MCF 10A (cell line): ENCODE measurements at regions of chr11 and their contacts with region 1.

Region 1: GRCh38 chr11:57530596-57531507 is at the start of gene TIMM10:
- DNase-seq: peak; percentile 98
- H3K4me3 Mint-ChIP-seq: peak within 1 kb of the TSS; percentile 96
- H3K27ac Mint-ChIP-seq: peak within 1 kb of the TSS; percentile 79
- H3K4me1 Mint-ChIP-seq: peaks cover 11% of the 10 kb centered on the region
- H3K27me3 Mint-ChIP-seq: peaks cover 8% of the 10 kb centered on the region
- CTCF ChIP-seq: no peak
- total RNA-seq, gene TIMM10: 52.2 and 80.3 TPM in 2 replicates

Region 2: DNA sequence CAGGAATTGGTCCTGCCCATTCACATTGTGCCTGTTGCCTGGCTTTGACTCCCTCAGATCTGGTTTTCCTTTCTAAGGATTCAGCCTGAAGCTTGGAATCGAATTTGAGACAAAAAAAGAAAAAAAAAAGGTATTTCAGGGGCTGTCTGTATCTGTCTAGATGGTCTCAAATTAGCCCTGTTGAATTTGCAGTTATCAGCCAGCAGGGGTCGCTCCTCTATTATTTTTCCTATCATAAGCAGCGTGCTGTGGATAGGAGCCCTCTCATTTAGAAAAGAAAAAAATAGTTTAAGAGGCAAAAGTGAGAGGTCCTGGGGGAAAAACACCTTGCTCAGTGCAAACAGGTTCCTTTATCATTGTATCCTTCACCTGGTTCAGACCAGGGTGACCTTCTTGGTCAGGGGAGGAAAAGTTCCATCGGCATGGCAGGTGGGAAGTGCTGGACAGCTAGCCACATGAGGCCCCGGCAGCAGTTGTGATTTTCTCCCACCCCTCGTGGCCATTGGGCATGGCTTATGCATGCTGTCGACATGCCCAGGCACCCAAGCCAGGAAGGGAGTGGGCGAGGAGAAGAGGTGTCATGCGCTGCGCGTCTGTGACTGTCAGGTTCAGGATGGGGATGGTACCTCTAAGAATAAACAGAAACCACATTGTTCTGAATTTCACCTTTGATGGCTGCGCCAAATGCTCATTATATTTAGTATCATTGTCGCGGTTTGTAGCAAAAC is 529.0 kb before region 1 on chr11:
- CTCF ChIA-PET with region 1: no interaction called
- POLR2A ChIA-PET with region 1: no interaction called
- intact Hi-C with region 1: no loop called
- DNase-seq: peak; percentile 11
- H3K4me3 Mint-ChIP-seq: no peak overlapping the region
- H3K27ac Mint-ChIP-seq: no peak overlapping the region
- H3K4me1 Mint-ChIP-seq: no peaks in the 10 kb centered on the region
- H3K27me3 Mint-ChIP-seq: no peaks in the 10 kb centered on the region
- CTCF ChIP-seq: peak; percentile 42

Region 3: GRCh38 chr11:57237204-57237681 is 293.6 kb before region 1 on chr11 and contains the start of gene APLNR:
- CTCF ChIA-PET with region 1: no interaction called
- POLR2A ChIA-PET with region 1: no interaction called
- intact Hi-C with region 1: no loop called
- DNase-seq: no peak
- H3K4me3 Mint-ChIP-seq: no peak within 1 kb of the TSS
- H3K27ac Mint-ChIP-seq: no peak within 1 kb of the TSS
- H3K4me1 Mint-ChIP-seq: no peaks in the 10 kb centered on the region
- H3K27me3 Mint-ChIP-seq: peaks cover 23% of the 10 kb centered on the region
- CTCF ChIP-seq: no peak
- total RNA-seq, gene APLNR: not detected in 2 replicates

Region 4: DNA sequence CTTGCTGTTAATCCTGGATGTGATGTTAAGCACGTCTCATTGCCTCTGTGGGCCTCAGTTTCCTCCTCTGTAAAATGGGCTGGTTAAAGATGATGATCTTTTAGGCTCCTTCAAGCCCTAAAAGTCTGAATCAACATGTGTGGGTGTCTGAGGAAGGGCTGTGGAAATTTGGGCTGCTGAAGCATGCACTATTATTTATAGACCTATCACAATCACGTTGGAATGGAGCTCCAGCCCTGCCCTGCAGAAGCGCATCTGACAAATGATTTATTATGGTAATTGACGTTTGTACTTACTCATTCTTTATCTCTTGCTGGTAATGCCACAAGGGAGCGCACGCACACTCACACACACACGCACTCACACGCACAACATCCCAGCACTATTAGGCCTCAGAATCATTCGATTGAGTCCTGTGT is 172.3 kb before region 1 on chr11:
- CTCF ChIA-PET with region 1: interaction called, 29 read pairs
- POLR2A ChIA-PET with region 1: no interaction called
- intact Hi-C with region 1: no loop called
- DNase-seq: no peak
- H3K4me3 Mint-ChIP-seq: no peak overlapping the region
- H3K27ac Mint-ChIP-seq: no peak overlapping the region
- H3K4me1 Mint-ChIP-seq: no peaks in the 10 kb centered on the region
- H3K27me3 Mint-ChIP-seq: no peaks in the 10 kb centered on the region
- CTCF ChIP-seq: no peak

Region 5: DNA sequence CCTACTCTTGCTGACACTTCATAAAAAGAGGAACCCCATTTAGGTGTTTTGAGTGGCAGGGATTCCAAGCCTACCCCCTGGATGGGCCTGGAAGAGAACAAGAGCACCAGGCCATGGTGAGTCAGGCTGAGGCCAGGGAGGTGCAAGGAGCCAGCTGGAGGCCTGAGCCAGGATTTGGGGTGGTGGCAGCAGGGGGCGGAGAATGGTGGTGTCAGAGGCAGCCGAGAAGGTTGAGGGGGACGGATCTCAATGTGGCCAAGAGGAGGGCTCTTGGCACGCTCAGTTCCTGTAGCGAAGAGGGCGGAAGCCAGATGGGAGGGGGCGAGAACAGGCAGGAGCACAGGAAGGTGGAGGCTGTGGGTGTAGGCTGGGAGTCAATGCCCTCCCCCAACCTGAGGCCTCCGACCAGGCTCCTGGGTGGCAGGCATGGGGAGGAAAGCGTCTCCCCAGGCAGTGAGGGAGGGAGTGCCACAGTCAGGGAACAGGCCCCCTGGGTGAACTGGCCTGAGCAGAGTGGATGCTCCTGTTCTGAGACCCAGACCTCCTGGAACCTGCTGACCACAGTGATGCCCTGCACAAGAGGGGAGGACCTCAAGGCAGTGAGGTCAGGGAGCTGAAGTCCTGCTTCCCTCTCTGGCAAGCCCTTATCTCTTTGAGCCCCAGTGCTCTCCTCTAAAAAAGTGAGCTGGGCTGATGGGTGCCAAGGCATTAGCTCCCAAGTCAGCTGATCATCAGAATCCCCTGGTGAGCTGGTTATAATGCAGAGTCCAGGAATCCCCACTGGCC is 56.6 kb before region 1 on chr11:
- CTCF ChIA-PET with region 1: interaction called, 20 read pairs
- POLR2A ChIA-PET with region 1: no interaction called
- intact Hi-C with region 1: no loop called
- DNase-seq: no peak
- H3K4me3 Mint-ChIP-seq: no peak overlapping the region
- H3K27ac Mint-ChIP-seq: no peak overlapping the region
- H3K4me1 Mint-ChIP-seq: no peaks in the 10 kb centered on the region
- H3K27me3 Mint-ChIP-seq: no peaks in the 10 kb centered on the region
- CTCF ChIP-seq: no peak

Region 6: DNA sequence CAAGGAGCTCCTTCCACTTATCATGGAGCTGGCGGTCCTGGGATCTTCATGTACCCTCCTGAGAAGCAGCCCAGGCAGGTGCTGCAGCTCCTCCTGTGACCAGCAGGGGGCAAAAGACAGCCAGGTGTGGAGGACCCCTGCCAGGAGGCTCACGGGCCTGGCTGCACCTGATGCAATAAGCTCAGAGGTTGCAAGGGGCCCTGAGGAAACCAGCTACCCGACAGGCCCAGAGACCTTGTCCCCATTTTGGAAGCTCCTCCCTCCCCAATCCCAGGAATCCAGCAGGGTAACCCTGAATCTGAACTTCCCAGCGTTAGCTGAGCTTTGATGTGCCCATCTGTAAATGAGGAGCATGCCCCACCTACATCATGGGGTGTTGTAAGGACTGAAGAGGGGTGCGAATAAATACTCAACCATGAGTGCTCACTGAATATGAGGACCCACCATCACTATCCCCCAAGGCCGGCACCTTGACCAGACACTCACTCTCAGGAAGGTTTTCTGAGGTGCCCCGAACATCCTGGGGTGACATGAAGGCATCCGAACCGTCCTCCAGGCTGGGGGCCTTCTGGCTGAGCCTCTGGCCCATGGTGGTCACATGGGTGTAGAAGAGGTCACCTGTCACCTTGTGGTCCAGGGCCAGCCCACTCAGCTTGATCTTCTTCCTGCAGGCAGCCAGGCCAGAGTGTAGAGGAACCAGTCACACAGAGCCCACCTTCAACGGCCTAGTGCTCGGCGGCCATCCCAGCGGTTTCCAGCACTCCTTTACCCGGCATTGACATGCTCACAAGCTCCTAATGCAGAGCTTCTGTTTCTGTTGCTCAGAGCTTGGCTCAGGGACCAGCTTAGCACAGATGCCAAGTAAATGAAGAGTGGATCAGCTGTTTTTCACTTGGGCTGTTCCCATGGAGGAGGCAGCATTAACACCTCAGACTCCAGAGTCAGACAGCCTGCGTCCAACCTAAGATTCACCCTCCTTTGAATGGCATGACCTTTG is 37.0 kb before region 1 on chr11:
- CTCF ChIA-PET with region 1: interaction called, 212 read pairs
- POLR2A ChIA-PET with region 1: interaction called, 5 read pairs
- intact Hi-C with region 1: loop called (anchors 1 kb)
- DNase-seq: peak; percentile 82
- H3K4me3 Mint-ChIP-seq: no peak overlapping the region
- H3K27ac Mint-ChIP-seq: no peak overlapping the region
- H3K4me1 Mint-ChIP-seq: peaks cover 13% of the 10 kb centered on the region
- H3K27me3 Mint-ChIP-seq: peaks cover under 1% of the 10 kb centered on the region
- CTCF ChIP-seq: peak; percentile 88

Region 7: DNA sequence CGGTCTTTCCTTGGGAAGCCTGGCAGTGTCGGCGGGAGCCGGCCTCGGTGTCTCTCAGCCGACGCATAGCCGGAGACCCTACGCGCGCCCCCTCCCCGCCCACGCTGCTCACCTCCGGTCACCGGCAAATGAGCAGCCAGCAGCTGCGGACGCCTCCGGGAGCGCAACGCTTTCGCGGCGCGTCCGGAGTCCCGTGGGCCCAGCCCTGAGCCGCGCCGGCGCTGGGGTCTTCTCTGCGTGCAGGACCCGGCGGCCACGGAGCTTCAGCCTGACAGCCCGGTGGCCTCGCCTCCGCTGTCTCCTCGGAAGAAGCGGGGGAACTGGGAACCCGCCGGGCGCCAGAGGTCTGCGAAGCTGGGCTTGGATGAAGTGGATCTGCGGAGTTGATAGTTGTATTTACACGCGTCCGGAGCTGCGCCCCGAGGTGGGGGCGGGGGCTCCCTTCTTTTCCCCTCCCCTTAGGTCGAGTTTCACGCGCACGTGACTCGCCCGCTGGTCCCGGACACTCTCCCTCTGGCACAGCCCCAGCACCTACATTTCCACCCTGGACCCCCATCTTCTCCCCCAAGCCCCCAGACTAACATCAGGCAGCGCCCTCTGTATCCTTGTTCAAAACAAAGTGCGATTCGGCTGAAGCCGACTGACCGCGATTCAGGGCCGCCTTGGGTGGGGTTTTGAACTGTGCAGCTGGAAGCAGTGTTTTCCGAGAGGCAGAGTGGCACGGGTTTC is 15.4 kb before region 1 on chr11 and contains the start of gene SLC43A1:
- CTCF ChIA-PET with region 1: interaction called, 70 read pairs
- POLR2A ChIA-PET with region 1: interaction called, 5 read pairs
- intact Hi-C with region 1: no loop called
- DNase-seq: peak; percentile 42
- H3K4me3 Mint-ChIP-seq: peak within 1 kb of the TSS; percentile 83
- H3K27ac Mint-ChIP-seq: peak within 1 kb of the TSS; percentile 21
- H3K4me1 Mint-ChIP-seq: no peaks in the 10 kb centered on the region
- H3K27me3 Mint-ChIP-seq: no peaks in the 10 kb centered on the region
- CTCF ChIP-seq: no peak
- total RNA-seq, gene SLC43A1: 1.7 and 3.2 TPM in 2 replicates

Region 8: GRCh38 chr11:57596266-57596885 is 65.5 kb after region 1 on chr11:
- CTCF ChIA-PET with region 1: no interaction called
- POLR2A ChIA-PET with region 1: no interaction called
- intact Hi-C with region 1: no loop called
- DNase-seq: no peak
- H3K4me3 Mint-ChIP-seq: no peak overlapping the region
- H3K27ac Mint-ChIP-seq: no peak overlapping the region
- H3K4me1 Mint-ChIP-seq: peaks cover 8% of the 10 kb centered on the region
- H3K27me3 Mint-ChIP-seq: no peaks in the 10 kb centered on the region
- CTCF ChIP-seq: no peak

Region 9: GRCh38 chr11:57644748-57645688 is 114.2 kb after region 1 on chr11:
- CTCF ChIA-PET with region 1: interaction called, 38 read pairs
- POLR2A ChIA-PET with region 1: interaction called, 4 read pairs
- intact Hi-C with region 1: loop called (anchors 1 kb)
- DNase-seq: peak; percentile 83
- H3K4me3 Mint-ChIP-seq: no peak overlapping the region
- H3K27ac Mint-ChIP-seq: no peak overlapping the region
- H3K4me1 Mint-ChIP-seq: peaks cover 28% of the 10 kb centered on the region
- H3K27me3 Mint-ChIP-seq: peaks cover 35% of the 10 kb centered on the region
- CTCF ChIP-seq: peak; percentile 59

Region 10: GRCh38 chr11:57703341-57703740 is 172.5 kb after region 1 on chr11:
- CTCF ChIA-PET with region 1: no interaction called
- POLR2A ChIA-PET with region 1: no interaction called
- intact Hi-C with region 1: no loop called
- DNase-seq: no peak
- H3K4me3 Mint-ChIP-seq: no peak overlapping the region
- H3K27ac Mint-ChIP-seq: no peak overlapping the region
- H3K4me1 Mint-ChIP-seq: peaks cover 3% of the 10 kb centered on the region
- H3K27me3 Mint-ChIP-seq: no peaks in the 10 kb centered on the region
- CTCF ChIP-seq: no peak